ENCODE measurements at regions of chr5 and their contacts with region 1.

Region 1: GRCh38 chr5:65481635-65482295 is at the start of gene ADAMTS6:
- ATAC-seq: peak; percentile 71 to 90 (median 88)
- H3K4me3 ChIP-seq: peak within 1 kb of the TSS; percentile 27 to 41 (median 34)
- H3K27ac ChIP-seq: no peak within 1 kb of the TSS
- H3K4me1 ChIP-seq: peaks cover 0 to 8% of the 10 kb centered on the region in 2 donors
- total RNA-seq, gene ADAMTS6: 0.80 to 5.1 (median 3.4) TPM

Region 2: DNA sequence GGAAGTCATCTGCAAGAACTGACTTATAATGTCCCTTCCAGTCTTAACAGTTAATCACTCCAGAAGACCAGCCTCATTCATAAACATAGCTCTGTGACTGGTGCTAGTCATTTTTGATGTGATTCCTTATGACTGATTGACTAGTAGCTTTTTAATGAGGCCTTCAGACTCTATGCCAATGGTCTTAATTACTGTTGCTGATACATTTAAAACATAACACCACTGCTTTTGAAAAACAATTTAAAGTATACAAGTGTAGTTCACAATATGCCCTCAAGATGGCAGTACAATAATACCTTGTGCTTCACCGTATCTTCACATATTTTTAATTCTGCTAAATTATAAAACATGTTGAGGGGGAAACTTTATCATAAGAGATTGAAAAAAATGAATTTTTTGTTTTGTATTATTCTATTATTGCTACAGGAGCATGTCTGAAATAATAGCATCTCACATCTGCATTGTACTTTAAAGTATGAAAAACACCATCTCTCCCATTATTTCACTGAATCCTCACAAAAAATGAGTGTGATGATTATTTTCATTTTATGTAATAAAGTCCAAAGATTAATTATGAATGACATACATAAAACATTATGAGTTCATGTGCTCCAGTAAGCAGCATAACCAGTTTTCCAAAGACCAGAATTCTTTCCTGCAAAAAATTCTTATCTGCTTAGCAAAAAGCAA is 846.6 kb before region 1 on chr5:
- in situ Hi-C with region 1: loop called in 1 of 9 experiments (anchors 25 kb)
- ATAC-seq: no peak
- H3K4me3 ChIP-seq: no peak overlapping the region
- H3K27ac ChIP-seq: no peak overlapping the region
- H3K4me1 ChIP-seq: no peaks in the 10 kb centered on the region

Region 3: DNA sequence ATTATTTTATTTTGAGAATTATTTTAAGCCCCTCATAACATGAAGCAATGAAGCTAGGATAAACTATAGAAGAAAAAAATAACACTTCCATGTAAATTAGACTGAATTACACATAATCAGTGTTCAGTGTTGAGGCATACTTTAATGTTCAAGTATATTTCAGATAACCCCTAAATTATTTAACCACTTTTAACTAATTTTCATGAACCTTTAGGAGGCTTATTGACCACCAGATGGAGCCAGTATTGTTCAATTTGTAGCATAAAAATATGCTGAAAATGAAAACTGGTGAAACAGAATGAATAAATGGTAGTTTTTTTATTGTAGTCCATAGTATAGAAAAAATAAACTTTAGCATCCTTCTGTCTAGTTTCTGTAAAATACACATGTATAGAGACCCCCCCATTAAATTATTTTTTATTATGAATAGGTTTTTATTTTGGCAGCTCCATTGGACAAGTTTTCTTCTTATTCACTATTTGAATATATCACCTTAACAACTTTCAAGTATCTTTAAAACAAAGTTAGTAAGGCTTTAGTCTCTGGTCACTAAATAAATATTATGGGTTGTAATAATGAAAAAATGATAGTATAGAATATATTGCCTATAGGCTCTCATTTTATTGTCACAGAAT is 522.9 kb before region 1 on chr5:
- in situ Hi-C with region 1: loop called in 2 of 9 experiments (anchors 25 kb)
- ATAC-seq: no peak
- H3K4me3 ChIP-seq: no peak overlapping the region
- H3K27ac ChIP-seq: no peak overlapping the region
- H3K4me1 ChIP-seq: no peaks in the 10 kb centered on the region

Region 4: GRCh38 chr5:65076251-65076869 is 405.4 kb before region 1 on chr5:
- in situ Hi-C with region 1: loop called in 2 of 9 experiments (anchors 25 kb)
- ATAC-seq: peak in 3 of 8 experiments; percentile 74 to 93 (median 90)
- H3K4me3 ChIP-seq: no peak overlapping the region
- H3K27ac ChIP-seq: no peak overlapping the region
- H3K4me1 ChIP-seq: peaks cover 2 to 4% of the 10 kb centered on the region in 2 donors

Region 5: DNA sequence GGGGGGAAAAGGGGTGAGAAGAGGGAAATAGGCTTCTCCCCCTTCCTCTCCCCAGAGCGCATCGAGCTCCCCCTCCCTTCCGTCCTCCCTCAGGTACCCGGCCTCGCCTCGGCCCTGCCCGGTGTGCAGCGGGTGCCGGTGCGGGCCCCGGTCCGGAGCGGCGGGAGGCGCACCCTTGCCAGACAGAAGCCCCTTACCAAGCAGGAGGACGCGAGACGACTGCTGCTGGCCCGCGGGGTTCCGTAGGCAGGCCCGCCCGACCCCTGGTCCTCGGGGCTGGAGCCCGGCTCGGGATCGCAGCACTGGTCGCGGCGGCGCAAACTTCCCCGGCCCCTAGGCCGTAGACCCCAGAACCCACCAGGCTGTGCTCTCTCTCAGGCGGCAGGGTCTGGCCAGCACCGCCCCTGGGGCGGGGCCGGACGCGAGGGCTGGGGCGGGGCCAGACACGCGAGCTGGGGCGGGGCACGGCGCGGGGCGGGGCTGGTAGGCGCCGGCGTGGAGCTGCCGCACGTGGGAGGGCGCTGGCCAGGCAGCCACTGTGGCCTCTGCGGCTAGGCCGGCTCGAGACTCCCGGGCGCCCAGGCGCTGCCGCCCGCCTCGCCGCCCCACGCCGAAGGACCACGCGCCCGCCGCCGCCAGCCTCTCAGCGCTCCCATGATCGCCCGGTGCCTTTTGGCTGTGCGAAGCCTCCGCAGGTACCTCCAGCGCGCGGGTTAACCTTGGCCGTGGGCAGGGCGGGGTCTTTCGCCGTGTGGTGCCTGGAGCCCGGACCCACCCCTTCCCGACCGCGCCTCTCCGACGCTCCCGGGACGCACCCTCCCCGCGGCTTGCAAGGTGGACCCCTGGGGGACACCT is 240.2 kb after region 1 on chr5 and contains the starts of genes NLN and SGTB:
- in situ Hi-C with region 1: no loop called
- ATAC-seq: peak; percentile 82 to 94 (median 92)
- H3K4me3 ChIP-seq: peak within 1 kb of the TSS; percentile 72 to 93 (median 80)
- H3K27ac ChIP-seq: peak within 1 kb of the TSS; percentile 77 to 82
- H3K4me1 ChIP-seq: peaks cover 7 to 11% of the 10 kb centered on the region in 2 donors
- total RNA-seq, gene NLN: 9.2 to 24.6 (median 21.3) TPM
- total RNA-seq, gene SGTB: 2.8 to 35.3 (median 13.4) TPM

Measured in motor neuron (in vitro differentiated cells).